ENCODE measurements at regions of chr10 and their contacts with region 1.

Region 1: DNA sequence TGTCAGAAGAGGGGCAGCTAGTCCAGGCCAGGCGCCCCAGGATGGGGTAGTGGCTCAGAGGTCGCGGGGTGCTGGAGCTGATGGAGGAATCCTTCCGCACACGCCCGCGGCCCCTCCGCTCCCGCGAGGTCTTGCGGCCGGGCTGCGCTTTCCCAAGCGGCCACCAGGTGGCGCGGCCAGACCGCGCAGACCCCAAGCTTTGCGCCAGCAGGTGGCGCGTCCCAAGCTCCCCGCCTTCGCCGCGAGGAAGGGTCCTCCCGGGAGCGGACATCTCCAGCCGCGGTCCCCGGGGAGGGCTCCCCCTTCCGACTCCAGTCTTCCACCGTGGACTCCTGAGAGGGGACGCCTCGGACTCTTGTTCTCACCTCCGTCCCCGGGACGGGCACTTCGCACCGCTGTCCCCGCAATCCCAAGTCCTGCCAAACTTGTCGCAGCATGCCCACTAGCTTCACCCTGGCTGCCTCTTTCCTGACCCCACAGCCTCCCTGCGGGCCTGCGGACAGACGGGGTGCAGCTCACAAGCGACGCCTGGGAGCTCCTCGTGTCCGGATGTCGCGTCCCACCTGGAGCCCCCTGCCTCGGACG is 19.4 kb downstream of the KCNK18 start:
- DNase-seq: peak; percentile 78 to 84
- ATAC-seq: peak; percentile 57 to 84
- H3K4me3 ChIP-seq: peak overlapping the region; percentile 63
- H3K27ac ChIP-seq: peak overlapping the region; percentile 74 to 94
- H3K4me1 ChIP-seq: peaks cover 37% of the 10 kb centered on the region
- CTCF ChIP-seq: peak; percentile 100
- EP300 ChIP-seq: no peak
- POLR2A ChIP-seq: no peak
- RAD21 ChIP-seq: peak; percentile 94 to 99

Region 2: GRCh38 chr10:117198088-117198487 is 18.6 kb before region 1 on chr10:
- CTCF ChIA-PET with region 1: interaction called, 102 read pairs
- POLR2A ChIA-PET with region 1: no interaction called
- DNase-seq: no peak
- ATAC-seq: no peak
- H3K4me3 ChIP-seq: no peak overlapping the region
- H3K27ac ChIP-seq: no peak overlapping the region
- H3K4me1 ChIP-seq: no peaks in the 10 kb centered on the region
- CTCF ChIP-seq: no peak
- EP300 ChIP-seq: no peak
- POLR2A ChIP-seq: no peak
- RAD21 ChIP-seq: no peak

Region 3: DNA sequence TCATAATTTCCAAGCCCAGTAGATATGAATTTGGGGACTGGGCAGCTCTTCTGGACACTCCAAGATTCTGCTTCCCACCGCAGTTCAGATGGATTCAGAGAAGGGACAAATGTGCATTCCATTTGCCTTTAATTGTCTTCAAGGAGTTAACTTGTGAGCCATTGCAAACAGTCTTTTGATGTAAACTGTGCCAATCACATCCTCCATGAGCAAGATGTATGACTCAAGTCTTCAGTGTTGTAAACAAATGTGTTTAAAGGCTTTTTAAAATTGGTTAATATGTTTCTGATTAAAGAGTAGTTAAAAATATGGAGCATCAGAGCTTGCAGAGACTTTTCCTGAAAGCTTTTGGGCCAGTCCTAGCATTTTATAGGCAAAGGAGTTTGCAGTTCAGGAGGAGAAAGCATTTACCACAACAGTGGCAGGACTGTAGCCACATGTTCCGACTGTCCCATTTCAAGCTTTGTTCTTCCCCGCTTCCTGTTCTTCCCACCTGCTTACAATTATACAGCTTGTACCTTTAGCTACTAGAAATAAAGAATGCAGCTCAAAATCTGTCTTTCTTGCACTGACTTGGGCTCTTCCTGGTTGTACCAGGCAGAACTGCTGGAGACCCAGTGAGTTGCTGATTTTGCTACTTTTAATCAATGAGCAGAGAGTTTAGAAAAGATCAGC is 30.4 kb after region 1 on chr10:
- CTCF ChIA-PET with region 1: interaction called, 22 read pairs
- POLR2A ChIA-PET with region 1: no interaction called
- DNase-seq: no peak
- ATAC-seq: no peak
- H3K4me3 ChIP-seq: no peak overlapping the region
- H3K27ac ChIP-seq: no peak overlapping the region
- H3K4me1 ChIP-seq: 0 out of 3 replicates have a peak, but pooled peaks cover 3% of the 10 kb centered on the region
- CTCF ChIP-seq: no peak
- EP300 ChIP-seq: no peak
- POLR2A ChIP-seq: no peak
- RAD21 ChIP-seq: no peak

Region 4: GRCh38 chr10:117284716-117285494 is 68.2 kb after region 1 on chr10:
- CTCF ChIA-PET with region 1: interaction called, 38 read pairs
- POLR2A ChIA-PET with region 1: no interaction called
- DNase-seq: no peak
- ATAC-seq: no peak
- H3K4me3 ChIP-seq: no peak overlapping the region
- H3K27ac ChIP-seq: no peak overlapping the region
- H3K4me1 ChIP-seq: no peaks in the 10 kb centered on the region
- CTCF ChIP-seq: no peak
- EP300 ChIP-seq: no peak
- POLR2A ChIP-seq: no peak
- RAD21 ChIP-seq: no peak

Region 5: DNA sequence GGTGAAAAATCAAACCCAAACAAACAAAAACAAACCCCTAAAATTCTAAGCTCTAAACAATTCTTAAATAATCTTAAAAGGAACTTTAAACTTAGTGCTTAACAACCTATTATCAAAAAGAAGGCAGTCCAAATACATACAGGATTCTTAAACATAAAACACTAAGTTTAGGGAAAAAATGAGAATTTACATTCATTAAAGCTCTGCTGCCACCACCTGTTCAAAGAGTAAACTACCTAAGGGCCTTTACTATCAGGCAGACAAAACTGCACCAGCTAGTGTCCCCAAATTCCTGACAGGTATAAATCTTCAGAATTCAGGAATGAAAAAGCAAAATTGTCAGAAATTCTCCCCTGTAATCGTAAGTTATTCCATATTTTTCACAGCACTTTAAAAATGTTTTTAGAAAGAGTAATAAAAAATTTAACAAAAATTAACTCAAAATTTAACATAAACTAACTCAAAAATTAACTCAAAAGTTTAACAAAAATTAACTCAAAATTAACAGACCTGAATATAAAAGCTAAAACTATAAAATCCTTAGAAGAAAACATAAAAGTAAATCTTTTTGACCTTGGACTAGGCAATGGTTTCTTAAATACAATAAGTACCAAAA is 103.5 kb after region 1 on chr10:
- CTCF ChIA-PET with region 1: interaction called, 221 read pairs
- POLR2A ChIA-PET with region 1: interaction called, 13 read pairs
- DNase-seq: peak; percentile 30 to 35
- ATAC-seq: peak; percentile 47 to 75; a peak in 3 of 6 replicates
- H3K4me3 ChIP-seq: no peak overlapping the region
- H3K27ac ChIP-seq: no peak overlapping the region
- H3K4me1 ChIP-seq: peaks cover 40% of the 10 kb centered on the region
- CTCF ChIP-seq: peak; percentile 76
- EP300 ChIP-seq: no peak
- POLR2A ChIP-seq: no peak
- RAD21 ChIP-seq: peak; percentile 64 to 70

Region 6: DNA sequence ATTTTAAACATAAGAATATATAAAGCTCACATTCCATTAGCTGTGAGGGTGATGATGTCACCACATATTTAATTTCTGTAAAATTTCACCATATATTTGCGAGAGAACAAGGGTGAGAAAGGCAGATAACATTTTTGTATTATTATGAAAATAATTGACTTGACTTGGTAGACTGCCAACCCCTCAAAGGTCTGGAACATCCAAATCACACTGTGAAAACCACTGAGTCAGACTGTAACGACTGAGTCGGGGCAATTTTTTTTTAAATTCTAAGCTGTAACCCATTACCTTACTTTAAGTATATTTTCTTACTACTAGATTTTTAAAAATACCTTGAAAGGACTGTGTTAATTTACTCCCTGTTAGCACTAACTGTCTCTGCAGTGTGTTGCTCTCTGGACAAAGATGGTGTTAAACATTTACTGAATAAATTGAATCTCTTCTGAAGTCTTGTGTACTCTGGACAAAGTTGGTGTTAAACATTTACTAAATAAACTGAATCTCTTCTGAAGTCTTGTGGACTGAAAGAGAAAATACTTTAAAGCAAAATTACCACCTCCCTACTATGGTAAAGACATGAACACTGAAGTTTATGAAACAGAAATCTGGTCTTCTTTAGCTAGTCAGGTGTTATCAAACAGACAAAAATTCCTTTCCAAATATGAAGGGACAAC is 144.4 kb after region 1 on chr10:
- CTCF ChIA-PET with region 1: interaction called, 13 read pairs
- POLR2A ChIA-PET with region 1: no interaction called
- DNase-seq: peak in 1 of 2 experiments; percentile 62
- ATAC-seq: peak in 1 of 2 experiments; percentile 72; a peak in 3 of 6 replicates
- H3K4me3 ChIP-seq: peak overlapping the region; percentile 25; the same call in 2 of the 3 replicates
- H3K27ac ChIP-seq: peak overlapping the region; percentile 90 to 92
- H3K4me1 ChIP-seq: peaks cover 70% of the 10 kb centered on the region
- CTCF ChIP-seq: no peak
- EP300 ChIP-seq: peak; percentile 22 to 42; a peak in 2 of 5 replicates
- POLR2A ChIP-seq: no peak
- RAD21 ChIP-seq: peak in 1 of 2 experiments; percentile 5; a peak in 1 of 5 replicates

Region 7: DNA sequence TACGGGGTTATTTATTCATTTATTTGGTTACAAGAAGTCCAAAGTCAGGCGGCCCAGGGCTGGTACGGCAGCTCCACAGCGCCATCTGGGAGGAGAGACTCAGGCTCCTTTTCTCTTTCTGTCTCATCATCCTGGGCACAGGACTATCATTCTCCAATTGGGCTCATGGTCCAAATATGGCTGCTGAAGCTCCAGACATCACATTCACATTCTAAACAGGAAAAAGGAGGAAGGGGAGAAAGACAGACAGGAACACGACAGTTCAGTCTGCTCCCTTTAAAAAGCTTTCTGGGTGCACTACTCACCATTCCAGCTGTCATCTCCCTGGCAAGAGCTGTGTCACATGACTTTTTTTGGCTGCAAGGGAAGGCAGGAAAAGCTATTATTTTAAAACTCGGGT is 232.9 kb after region 1 on chr10:
- CTCF ChIA-PET with region 1: interaction called, 22 read pairs
- POLR2A ChIA-PET with region 1: no interaction called
- DNase-seq: peak in 1 of 2 experiments; percentile 30
- ATAC-seq: peak in 1 of 2 experiments; percentile 63; a peak in 3 of 6 replicates
- H3K4me3 ChIP-seq: no peak overlapping the region
- H3K27ac ChIP-seq: no peak overlapping the region
- H3K4me1 ChIP-seq: no peaks in the 10 kb centered on the region
- CTCF ChIP-seq: peak; percentile 29; the same call in 2 of the 3 replicates
- EP300 ChIP-seq: no peak
- POLR2A ChIP-seq: no peak
- RAD21 ChIP-seq: peak; percentile 35 to 43; a peak in 2 of 5 replicates

Measured in A549 (cell line).